Naive thymus-derived CD4-positive, alpha-beta T cell (primary cell): ENCODE measurements at regions of chr2 and their contacts with region 1.

Region 1: GRCh38 chr2:177148477-177149154 is 64.0 kb upstream of the HNRNPA3 start:
- DNase-seq: peak; percentile 60 to 77 (median 71)
- ATAC-seq: peak; percentile 96
- H3K4me3 ChIP-seq: peak overlapping the region; percentile 72
- H3K4me3 Mint-ChIP-seq: peak overlapping the region; percentile 84 to 94 (median 89)
- H3K27ac ChIP-seq: no peak overlapping the region
- H3K27ac Mint-ChIP-seq: peak overlapping the region in 8 of 9 donors; percentile 3 to 33 (median 11)
- H3K4me1 ChIP-seq: peaks cover 6 to 14% of the 10 kb centered on the region in 2 donors
- H3K4me1 Mint-ChIP-seq: peaks cover 8 to 16% (median 11%) of the 10 kb centered on the region in 7 donors
- H3K27me3 ChIP-seq: peaks cover 0 to 3% of the 10 kb centered on the region in 2 donors
- H3K27me3 Mint-ChIP-seq: peaks cover 33 to 73% (median 52%) of the 10 kb centered on the region in 5 donors

Region 2: GRCh38 chr2:176140513-176141317 is 1007.9 kb before region 1 on chr2:
- CTCF ChIA-PET with region 1: no interaction called
- POLR2A ChIA-PET with region 1: no interaction called
- intact Hi-C with region 1: loop called in 1 of 2 experiments (anchors 5 kb)
- DNase-seq: peak; percentile 35 to 76 (median 61)
- ATAC-seq: peak; percentile 87
- H3K4me3 ChIP-seq: peak overlapping the region; percentile 36
- H3K4me3 Mint-ChIP-seq: peak overlapping the region in 9 of 10 donors; percentile 23 to 78 (median 43)
- H3K27ac ChIP-seq: no peak overlapping the region
- H3K27ac Mint-ChIP-seq: peak overlapping the region in 1 of 9 donors; percentile 0
- H3K4me1 ChIP-seq: peaks cover 3 to 26% of the 10 kb centered on the region in 2 donors
- H3K4me1 Mint-ChIP-seq: peaks cover 7 to 46% (median 36%) of the 10 kb centered on the region in 7 donors
- H3K27me3 ChIP-seq: peaks cover 16 to 51% of the 10 kb centered on the region in 2 donors
- H3K27me3 Mint-ChIP-seq: peaks cover 83 to 91% (median 88%) of the 10 kb centered on the region in 5 donors

Region 3: GRCh38 chr2:176554101-176555048 is 594.2 kb before region 1 on chr2:
- CTCF ChIA-PET with region 1: no interaction called
- POLR2A ChIA-PET with region 1: no interaction called
- intact Hi-C with region 1: loop called (anchors 5 to 10 kb)
- DNase-seq: peak in 8 of 9 donors; percentile 23 to 66 (median 48)
- ATAC-seq: peak; percentile 69
- H3K4me3 ChIP-seq: peak overlapping the region; percentile 62
- H3K4me3 Mint-ChIP-seq: peak overlapping the region; percentile 75 to 93 (median 85)
- H3K27ac ChIP-seq: no peak overlapping the region
- H3K27ac Mint-ChIP-seq: peak overlapping the region in 3 of 9 donors; percentile 28 to 41 (median 38)
- H3K4me1 ChIP-seq: no peaks in the 10 kb centered on the region
- H3K4me1 Mint-ChIP-seq: peaks cover 6 to 13% (median 13%) of the 10 kb centered on the region in 7 donors
- H3K27me3 ChIP-seq: no peaks in the 10 kb centered on the region
- H3K27me3 Mint-ChIP-seq: peaks cover 45 to 66% (median 48%) of the 10 kb centered on the region in 5 donors

Region 4: DNA sequence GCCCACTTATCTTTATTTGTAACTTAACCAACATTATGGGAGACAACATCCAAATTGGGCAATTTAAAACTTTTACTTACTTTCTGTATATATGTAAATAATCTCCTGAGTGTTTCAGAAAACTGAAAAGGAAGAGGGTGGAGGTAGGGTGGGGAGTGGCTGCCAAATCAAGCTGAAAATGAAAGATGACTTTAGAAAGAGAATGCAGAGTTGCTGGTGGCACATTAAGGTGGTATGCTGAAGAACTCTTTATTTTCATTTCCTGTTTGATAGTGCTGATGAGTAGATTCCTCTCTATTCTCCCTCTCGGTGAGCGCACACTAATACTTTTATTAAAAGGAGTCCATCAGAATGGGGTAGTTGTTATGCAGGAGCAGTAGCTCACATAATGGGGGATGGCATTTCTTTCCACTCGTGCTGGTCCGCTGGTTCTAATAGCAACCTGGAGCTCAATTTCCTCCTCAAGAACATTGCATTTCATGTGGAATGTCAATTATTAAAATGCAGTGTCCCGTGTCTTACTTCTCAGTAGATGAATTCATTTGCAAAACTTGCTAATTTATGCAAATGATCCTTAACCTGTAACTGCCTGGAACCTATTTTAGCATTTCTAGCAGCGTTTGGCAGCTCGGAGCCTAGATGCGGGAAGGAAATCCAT is 402.9 kb before region 1 on chr2:
- CTCF ChIA-PET with region 1: no interaction called
- POLR2A ChIA-PET with region 1: no interaction called
- intact Hi-C with region 1: loop called in 1 of 2 experiments (anchors 2 kb)
- DNase-seq: no peak
- ATAC-seq: no peak
- H3K4me3 ChIP-seq: no peak overlapping the region
- H3K4me3 Mint-ChIP-seq: no peak overlapping the region
- H3K27ac ChIP-seq: no peak overlapping the region
- H3K27ac Mint-ChIP-seq: no peak overlapping the region
- H3K4me1 ChIP-seq: no peaks in the 10 kb centered on the region
- H3K4me1 Mint-ChIP-seq: peaks cover 0 to 8% (median 0%) of the 10 kb centered on the region in 7 donors
- H3K27me3 ChIP-seq: no peaks in the 10 kb centered on the region
- H3K27me3 Mint-ChIP-seq: peaks cover 0 to 25% (median 7%) of the 10 kb centered on the region in 5 donors

Region 5: GRCh38 chr2:177029480-177029879 is 119.1 kb before region 1 on chr2:
- CTCF ChIA-PET with region 1: no interaction called
- POLR2A ChIA-PET with region 1: no interaction called
- intact Hi-C with region 1: loop called in 1 of 2 experiments (anchors 1 kb)
- DNase-seq: no peak
- ATAC-seq: no peak
- H3K4me3 ChIP-seq: no peak overlapping the region
- H3K4me3 Mint-ChIP-seq: no peak overlapping the region
- H3K27ac ChIP-seq: no peak overlapping the region
- H3K27ac Mint-ChIP-seq: no peak overlapping the region
- H3K4me1 ChIP-seq: no peaks in the 10 kb centered on the region
- H3K4me1 Mint-ChIP-seq: no peaks in the 10 kb centered on the region
- H3K27me3 ChIP-seq: no peaks in the 10 kb centered on the region
- H3K27me3 Mint-ChIP-seq: peaks cover 20 to 31% (median 20%) of the 10 kb centered on the region in 5 donors

Region 6: DNA sequence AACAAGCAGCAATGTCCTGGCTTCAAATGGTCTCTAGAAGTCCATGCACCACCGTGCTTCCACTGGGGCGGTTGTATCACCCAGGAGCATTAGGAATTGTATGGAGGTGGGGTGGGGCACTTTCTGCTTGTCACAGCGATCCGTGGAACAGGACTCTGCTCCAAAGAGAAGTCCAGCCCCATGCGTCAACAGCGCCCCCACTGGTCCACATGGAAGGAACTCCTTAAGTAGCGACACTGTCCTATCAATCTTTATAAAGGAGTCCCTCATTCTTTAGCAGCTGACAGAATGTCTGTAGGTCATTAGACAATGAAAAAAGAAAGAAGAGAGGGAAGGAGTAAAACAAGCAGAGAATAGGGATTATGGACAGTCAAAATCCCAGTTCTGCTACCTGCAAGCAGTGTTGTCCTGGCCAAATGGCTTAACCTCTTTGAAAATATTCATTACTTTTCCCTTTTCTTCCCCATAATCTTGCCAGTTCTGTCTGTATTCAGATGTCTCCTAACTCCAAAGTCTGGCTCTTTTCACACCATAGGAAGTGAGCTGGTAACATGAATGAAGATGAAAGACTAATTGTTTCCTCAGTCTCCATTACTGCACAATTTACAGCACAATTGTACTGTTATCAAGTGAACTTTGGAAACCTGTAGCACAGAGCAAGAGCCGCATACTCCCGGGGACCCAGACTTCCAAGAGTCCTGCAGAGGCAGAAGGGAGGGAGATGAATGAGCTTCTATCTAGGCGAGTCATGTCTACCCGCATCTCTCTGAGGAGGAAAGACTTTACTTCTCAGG is 106.0 kb after region 1 on chr2:
- CTCF ChIA-PET with region 1: no interaction called
- POLR2A ChIA-PET with region 1: no interaction called
- intact Hi-C with region 1: no loop called
- DNase-seq: no peak
- ATAC-seq: no peak
- H3K4me3 ChIP-seq: no peak overlapping the region
- H3K4me3 Mint-ChIP-seq: peak overlapping the region; percentile 22 to 92 (median 52)
- H3K27ac ChIP-seq: peak overlapping the region; percentile 4
- H3K27ac Mint-ChIP-seq: peak overlapping the region; percentile 15 to 98 (median 52)
- H3K4me1 ChIP-seq: peaks cover 39 to 84% of the 10 kb centered on the region in 2 donors
- H3K4me1 Mint-ChIP-seq: peaks cover 70 to 99% (median 97%) of the 10 kb centered on the region in 7 donors
- H3K27me3 ChIP-seq: no peaks in the 10 kb centered on the region
- H3K27me3 Mint-ChIP-seq: no peaks in the 10 kb centered on the region

Region 7: DNA sequence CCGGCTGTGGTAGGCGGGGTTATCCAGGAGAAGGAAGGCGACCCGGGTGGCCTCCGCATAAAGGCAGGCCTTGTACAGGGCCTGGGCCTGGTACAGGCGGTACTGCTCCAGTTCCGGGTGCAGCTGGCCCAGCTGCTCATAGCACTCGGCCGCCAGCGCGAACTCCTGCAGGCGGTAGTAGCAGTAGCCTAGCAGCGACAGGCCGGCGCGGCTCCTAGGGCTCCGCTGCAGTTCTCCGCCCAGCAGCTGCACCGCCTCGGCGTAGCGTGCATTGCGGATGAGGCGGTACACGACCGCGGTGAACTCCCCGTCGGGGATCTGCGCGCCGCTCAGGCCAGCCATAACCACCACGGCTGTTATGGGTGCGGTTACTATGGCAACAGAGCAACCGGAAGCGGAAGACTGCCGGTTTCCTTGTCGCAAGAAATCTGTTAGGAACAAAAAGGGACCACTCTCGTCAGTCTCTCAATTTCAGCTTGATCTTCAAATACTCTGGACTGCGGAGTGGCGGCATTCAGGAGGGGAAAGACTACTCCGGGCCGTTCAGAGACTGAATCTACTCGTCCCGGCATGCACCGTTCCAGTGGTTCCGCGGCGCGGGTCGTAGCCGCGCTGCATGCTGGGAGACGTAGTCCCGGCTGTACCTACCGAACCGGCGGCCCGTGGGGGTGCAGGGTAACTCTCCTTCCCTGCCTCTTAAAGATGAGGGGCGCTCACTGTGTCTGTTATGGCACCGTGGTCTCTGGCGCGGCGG is 404.0 kb after region 1 on chr2:
- CTCF ChIA-PET with region 1: no interaction called
- POLR2A ChIA-PET with region 1: no interaction called
- intact Hi-C with region 1: loop called in 1 of 2 experiments (anchors 5 kb)
- DNase-seq: peak; percentile 82 to 96 (median 94)
- ATAC-seq: peak; percentile 94
- H3K4me3 ChIP-seq: peak overlapping the region; percentile 89
- H3K4me3 Mint-ChIP-seq: peak overlapping the region; percentile 87 to 99 (median 94)
- H3K27ac ChIP-seq: peak overlapping the region; percentile 100
- H3K27ac Mint-ChIP-seq: peak overlapping the region; percentile 98 to 100 (median 99)
- H3K4me1 ChIP-seq: no peaks in the 10 kb centered on the region
- H3K4me1 Mint-ChIP-seq: peaks cover 4 to 29% (median 14%) of the 10 kb centered on the region in 7 donors
- H3K27me3 ChIP-seq: no peaks in the 10 kb centered on the region
- H3K27me3 Mint-ChIP-seq: peaks cover 0 to 14% (median 4%) of the 10 kb centered on the region in 5 donors